ENCODE measurements at regions of chr4 and their contacts with region 1.

Region 1: DNA sequence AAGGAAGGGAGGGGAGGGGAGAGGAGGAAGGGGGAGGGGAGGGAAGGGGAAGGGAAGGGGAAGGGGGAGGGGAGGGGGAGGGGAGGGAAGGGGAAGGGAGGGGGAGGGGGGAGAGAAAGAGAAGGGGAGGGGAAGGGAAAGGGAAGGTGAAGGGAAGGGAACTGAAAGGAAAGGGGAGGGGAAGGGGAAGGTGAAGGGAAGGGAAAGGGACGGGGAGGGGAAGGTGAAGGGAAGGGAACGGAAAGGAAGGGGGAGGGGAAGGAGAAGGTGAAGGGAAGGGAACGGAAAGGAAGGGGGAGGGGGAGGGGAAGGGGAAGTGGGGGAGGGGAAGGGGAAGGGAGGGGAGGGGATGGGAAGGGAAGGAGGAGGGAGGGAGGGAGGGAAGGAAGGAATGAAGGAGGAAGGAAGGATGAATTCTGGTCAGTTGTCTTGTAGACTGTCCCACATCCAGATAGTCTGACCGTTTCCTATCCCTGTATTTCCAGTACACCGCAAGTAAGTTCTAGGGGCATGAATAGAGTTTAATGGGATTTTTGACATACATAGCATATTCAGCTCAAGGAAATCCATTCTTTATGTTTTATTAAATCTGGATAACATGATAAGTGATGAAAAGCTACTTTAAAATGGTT is 20.4 kb downstream of the HERC5 start:
- DNase-seq: no peak
- ATAC-seq: no peak
- H3K4me3 ChIP-seq: no peak overlapping the region
- H3K4me3 Mint-ChIP-seq: no peak overlapping the region
- H3K27ac ChIP-seq: no peak overlapping the region
- H3K27ac Mint-ChIP-seq: no peak overlapping the region
- H3K4me1 ChIP-seq: no peaks in the 10 kb centered on the region
- H3K4me1 Mint-ChIP-seq: peaks cover 0 to 6% (median 4%) of the 10 kb centered on the region in 3 donors
- H3K27me3 ChIP-seq: no peaks in the 10 kb centered on the region
- H3K27me3 Mint-ChIP-seq: no peaks in the 10 kb centered on the region

Region 2: GRCh38 chr4:88251924-88252323 is 225.4 kb before region 1 on chr4:
- CTCF ChIA-PET with region 1: no interaction called
- POLR2A ChIA-PET with region 1: interaction called in 1 of 2 experiments, 13 read pairs
- DNase-seq: no peak
- ATAC-seq: no peak
- H3K4me3 ChIP-seq: no peak overlapping the region
- H3K4me3 Mint-ChIP-seq: no peak overlapping the region
- H3K27ac ChIP-seq: no peak overlapping the region
- H3K27ac Mint-ChIP-seq: no peak overlapping the region
- H3K4me1 ChIP-seq: no peaks in the 10 kb centered on the region
- H3K4me1 Mint-ChIP-seq: no peaks in the 10 kb centered on the region
- H3K27me3 ChIP-seq: no peaks in the 10 kb centered on the region
- H3K27me3 Mint-ChIP-seq: no peaks in the 10 kb centered on the region

Region 3: DNA sequence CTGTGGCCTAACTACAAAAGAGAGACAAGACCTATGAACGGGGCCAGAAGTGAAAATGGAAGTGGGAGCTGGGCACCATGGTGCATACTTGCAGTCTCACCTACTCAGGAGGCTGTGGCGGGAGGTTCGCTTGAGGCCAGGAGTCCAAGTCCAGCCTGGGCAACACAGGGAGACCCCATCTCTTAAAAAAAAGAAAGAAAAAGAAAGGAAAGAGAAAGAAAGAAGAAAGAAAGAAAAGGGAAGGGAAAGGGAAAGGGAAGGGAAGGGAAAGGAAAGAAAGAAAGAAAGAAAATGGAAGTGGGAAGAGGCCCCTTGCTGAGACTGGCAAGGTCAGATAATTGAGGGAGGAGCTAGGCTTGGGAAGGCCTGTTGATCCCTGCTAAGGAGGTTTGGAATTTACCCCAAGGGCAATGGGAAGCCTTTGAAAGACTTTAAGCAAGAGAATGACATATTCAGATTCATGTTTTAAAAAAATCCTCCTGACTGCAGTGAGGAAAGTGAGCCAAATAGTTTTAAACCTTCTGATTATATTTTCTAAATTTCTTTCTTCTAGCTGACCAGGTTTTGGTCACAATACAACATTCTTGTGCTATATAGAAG is 38.1 kb before region 1 on chr4:
- CTCF ChIA-PET with region 1: no interaction called
- POLR2A ChIA-PET with region 1: interaction called in 1 of 2 experiments, 14 read pairs
- DNase-seq: no peak
- ATAC-seq: no peak
- H3K4me3 ChIP-seq: no peak overlapping the region
- H3K4me3 Mint-ChIP-seq: no peak overlapping the region
- H3K27ac ChIP-seq: no peak overlapping the region
- H3K27ac Mint-ChIP-seq: peak overlapping the region; percentile 5 to 71
- H3K4me1 ChIP-seq: no peaks in the 10 kb centered on the region
- H3K4me1 Mint-ChIP-seq: no peaks in the 10 kb centered on the region
- H3K27me3 ChIP-seq: no peaks in the 10 kb centered on the region
- H3K27me3 Mint-ChIP-seq: no peaks in the 10 kb centered on the region

Measured in T-cell (primary cell).